ENCODE measurements at regions of chr14 and their contacts with region 1.

Region 1: DNA sequence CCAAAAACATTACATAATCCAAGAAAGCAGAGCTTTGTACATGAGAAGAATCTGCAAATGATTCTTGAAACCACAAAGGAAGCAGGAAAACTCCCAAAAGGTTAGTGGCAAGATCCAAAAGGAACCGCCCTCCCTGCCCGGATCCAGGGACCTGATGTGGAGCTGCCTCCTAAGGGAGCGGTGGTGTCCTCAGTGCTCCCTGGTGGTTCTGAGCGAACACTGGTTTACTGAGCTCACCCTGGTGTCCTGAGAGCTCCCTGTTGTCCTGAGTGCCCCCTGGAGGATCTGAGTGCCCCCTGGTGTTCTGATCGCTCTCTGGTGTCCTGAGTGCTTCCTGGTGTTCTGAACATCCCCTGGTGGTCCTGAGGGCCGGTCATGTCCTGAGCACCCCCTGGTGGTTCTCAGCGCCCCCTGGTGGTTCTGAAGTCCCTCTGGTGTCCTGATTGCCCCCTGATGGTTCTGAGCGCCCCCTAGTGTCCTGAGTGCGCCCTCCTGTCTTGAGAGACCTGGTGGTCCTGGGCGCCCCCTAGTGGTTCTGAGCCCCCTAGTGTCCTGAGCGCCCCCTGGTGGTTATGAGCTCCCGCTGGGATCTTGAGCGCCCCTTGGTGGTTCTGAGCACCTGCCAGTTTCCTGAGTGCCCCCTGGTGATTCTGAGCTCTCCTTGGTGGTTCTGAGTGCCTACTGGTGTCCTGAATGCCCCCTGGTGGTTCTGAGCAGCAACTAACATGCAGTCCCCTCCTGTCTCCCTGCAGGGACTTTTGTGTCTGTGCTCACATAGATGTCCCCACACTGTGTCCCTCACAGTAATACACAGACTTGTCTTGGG is 891.1 kb downstream of the TMEM121 start:
- DNase-seq: peak; percentile 99
- ATAC-seq: peak; percentile 91
- H3K4me3 Mint-ChIP-seq: no peak overlapping the region
- H3K27ac Mint-ChIP-seq: no peak overlapping the region
- H3K4me1 Mint-ChIP-seq: peaks cover 11% of the 10 kb centered on the region
- H3K27me3 Mint-ChIP-seq: peaks cover 6% of the 10 kb centered on the region

Region 2: GRCh38 chr14:106013879-106014376 is 403.5 kb before region 1 on chr14:
- CTCF ChIA-PET with region 1: interaction called, 5 read pairs
- POLR2A ChIA-PET with region 1: no interaction called
- intact Hi-C with region 1: loop called in 1 of 2 experiments (anchors 5 kb)
- DNase-seq: peak; percentile 67
- ATAC-seq: peak; percentile 74
- H3K4me3 Mint-ChIP-seq: peak overlapping the region; percentile 50
- H3K27ac Mint-ChIP-seq: peak overlapping the region; percentile 98
- H3K4me1 Mint-ChIP-seq: peaks cover 89% of the 10 kb centered on the region
- H3K27me3 Mint-ChIP-seq: no peaks in the 10 kb centered on the region

Region 3: DNA sequence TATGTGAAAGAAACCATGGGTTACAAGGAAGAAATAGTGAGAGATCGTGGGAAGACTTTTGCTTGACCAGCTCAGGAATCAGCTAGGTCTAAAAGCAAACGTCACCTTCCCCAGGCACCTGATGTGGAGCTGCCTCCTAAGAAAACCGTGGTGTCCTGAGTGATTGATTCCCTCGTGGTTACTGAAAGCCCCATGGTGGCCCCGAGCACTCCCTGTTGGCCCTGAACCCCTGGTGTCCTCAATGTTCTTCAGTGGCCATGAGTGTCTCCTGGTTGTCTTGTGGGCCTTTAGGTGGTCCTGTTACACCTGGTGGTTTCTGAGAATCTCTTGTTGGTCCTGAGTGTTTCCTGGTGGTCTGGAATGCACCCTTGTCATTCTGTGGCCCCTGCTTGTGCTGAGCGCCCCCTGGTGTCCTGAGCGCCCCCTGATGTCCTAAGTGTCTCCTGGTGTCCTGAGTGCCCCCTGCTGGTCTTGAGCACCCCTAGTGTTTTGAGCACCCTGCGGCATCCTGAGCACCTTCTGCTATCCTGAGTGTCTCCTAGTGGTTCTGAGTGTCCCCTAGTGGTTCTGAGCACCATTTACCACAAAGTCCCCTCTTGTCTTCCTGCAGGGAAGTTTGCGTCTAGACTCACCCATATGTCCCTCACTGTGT is 372.4 kb before region 1 on chr14:
- CTCF ChIA-PET with region 1: no interaction called
- POLR2A ChIA-PET with region 1: no interaction called
- intact Hi-C with region 1: no loop called
- DNase-seq: peak; percentile 93
- ATAC-seq: peak; percentile 100
- H3K4me3 Mint-ChIP-seq: no peak overlapping the region
- H3K27ac Mint-ChIP-seq: peak overlapping the region; percentile 34
- H3K4me1 Mint-ChIP-seq: peaks cover 11% of the 10 kb centered on the region
- H3K27me3 Mint-ChIP-seq: no peaks in the 10 kb centered on the region

Region 4: DNA sequence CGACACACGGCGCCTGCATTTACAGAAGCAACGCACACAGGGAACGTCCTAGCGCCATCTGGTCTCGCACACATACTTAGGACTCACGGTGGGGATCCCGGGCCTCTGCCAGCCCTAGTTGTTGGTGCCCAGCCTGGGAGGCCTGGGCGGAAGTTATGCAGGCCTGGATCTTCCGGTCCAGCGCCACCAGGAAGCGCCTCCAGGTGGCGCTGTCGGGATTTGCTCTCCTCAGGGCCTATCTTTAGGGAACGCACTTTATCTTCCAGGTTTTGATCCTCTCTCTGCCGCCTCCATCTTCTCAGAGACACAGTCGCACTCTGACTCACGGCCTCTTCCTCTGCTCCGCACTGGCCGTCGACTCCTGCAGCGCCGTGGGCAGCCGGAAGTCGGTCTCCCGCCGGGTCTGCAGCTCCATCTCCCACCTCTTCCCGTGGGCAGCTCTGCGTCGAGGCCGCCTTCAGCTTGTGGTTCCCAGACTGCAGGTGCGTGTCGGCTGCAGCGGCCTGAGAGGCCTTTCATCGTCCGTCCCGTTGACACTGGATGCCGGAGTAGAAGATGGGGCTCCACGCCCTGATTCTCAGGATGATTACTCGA is 130.6 kb before region 1 on chr14:
- CTCF ChIA-PET with region 1: interaction called, 13 read pairs
- POLR2A ChIA-PET with region 1: no interaction called
- intact Hi-C with region 1: no loop called
- DNase-seq: peak; percentile 56
- ATAC-seq: peak; percentile 44
- H3K4me3 Mint-ChIP-seq: no peak overlapping the region
- H3K27ac Mint-ChIP-seq: no peak overlapping the region
- H3K4me1 Mint-ChIP-seq: no peaks in the 10 kb centered on the region
- H3K27me3 Mint-ChIP-seq: peaks cover 3% of the 10 kb centered on the region

Region 5: GRCh38 chr14:106347291-106347778 is 70.1 kb before region 1 on chr14:
- CTCF ChIA-PET with region 1: interaction called, 12 read pairs
- POLR2A ChIA-PET with region 1: no interaction called
- intact Hi-C with region 1: no loop called
- DNase-seq: no peak
- ATAC-seq: no peak
- H3K4me3 Mint-ChIP-seq: no peak overlapping the region
- H3K27ac Mint-ChIP-seq: no peak overlapping the region
- H3K4me1 Mint-ChIP-seq: no peaks in the 10 kb centered on the region
- H3K27me3 Mint-ChIP-seq: no peaks in the 10 kb centered on the region

Region 6: GRCh38 chr14:106395456-106396050 is 21.9 kb before region 1 on chr14:
- CTCF ChIA-PET with region 1: interaction called, 132 read pairs
- POLR2A ChIA-PET with region 1: interaction called, 3 read pairs
- intact Hi-C with region 1: no loop called
- DNase-seq: peak; percentile 67
- ATAC-seq: peak; percentile 80
- H3K4me3 Mint-ChIP-seq: peak overlapping the region; percentile 55
- H3K27ac Mint-ChIP-seq: peak overlapping the region; percentile 93
- H3K4me1 Mint-ChIP-seq: peaks cover 31% of the 10 kb centered on the region
- H3K27me3 Mint-ChIP-seq: peaks cover 11% of the 10 kb centered on the region

Region 7: DNA sequence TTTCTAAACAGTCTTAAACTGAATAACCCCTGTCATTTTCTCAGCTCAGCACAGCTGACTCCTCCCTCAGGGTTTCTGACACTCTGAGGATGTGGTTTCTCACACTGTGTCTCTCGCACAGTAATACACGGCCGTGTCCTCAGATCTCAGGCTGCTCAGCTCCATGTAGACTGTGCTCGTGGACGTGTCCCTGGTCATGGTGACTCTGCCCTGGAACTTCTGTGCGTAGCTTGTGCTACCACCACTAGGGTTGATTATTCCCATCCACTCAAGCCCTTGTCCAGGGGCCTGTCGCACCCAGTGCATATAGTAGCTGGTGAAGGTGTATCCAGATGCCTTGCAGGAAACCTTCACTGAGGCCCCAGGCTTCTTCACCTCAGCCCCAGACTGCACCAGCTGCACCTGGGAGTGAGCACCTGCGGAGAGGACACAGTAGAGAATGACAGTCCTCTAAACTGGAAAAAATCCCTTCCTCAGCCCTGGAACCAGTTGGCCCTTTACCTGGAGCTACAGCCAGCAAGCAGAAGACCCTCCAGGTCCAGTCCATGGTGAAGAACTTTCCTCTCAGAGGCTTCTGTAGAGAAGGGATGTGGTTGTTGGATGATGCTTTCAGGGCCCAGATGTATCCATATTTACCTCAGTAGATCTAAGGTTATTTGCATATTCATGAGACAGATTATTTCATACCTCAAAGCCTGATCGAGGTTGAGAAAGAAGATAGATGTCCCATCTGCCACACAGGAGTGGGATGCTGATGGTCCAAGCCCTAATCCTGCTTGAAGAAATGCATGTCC is 93.8 kb after region 1 on chr14:
- CTCF ChIA-PET with region 1: interaction called, 54 read pairs
- POLR2A ChIA-PET with region 1: no interaction called
- intact Hi-C with region 1: no loop called
- DNase-seq: peak; percentile 69
- ATAC-seq: peak; percentile 53
- H3K4me3 Mint-ChIP-seq: peak overlapping the region; percentile 15
- H3K27ac Mint-ChIP-seq: peak overlapping the region; percentile 51
- H3K4me1 Mint-ChIP-seq: peaks cover 73% of the 10 kb centered on the region
- H3K27me3 Mint-ChIP-seq: no peaks in the 10 kb centered on the region

Region 8: DNA sequence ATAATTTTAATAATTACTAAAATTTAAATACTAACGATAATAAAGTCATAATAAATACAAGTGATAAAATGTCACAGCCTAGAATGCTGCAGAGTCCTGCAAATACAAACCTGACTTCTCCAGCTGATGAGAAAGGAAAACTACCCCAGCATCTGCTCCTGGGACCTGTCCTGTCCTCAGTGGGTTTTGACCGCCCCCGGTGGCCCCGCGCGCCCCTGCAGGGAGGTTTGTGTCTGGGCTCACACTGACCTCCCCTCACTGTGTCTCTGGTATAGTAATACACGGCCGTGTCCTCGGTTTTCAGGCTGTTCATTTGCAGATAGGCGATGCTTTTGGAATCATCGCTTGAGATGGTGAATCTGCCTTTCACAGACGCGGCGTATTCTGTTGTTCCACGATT is 248.4 kb after region 1 on chr14:
- CTCF ChIA-PET with region 1: interaction called, 6 read pairs
- POLR2A ChIA-PET with region 1: no interaction called
- intact Hi-C with region 1: loop called in 1 of 2 experiments (anchors 5 kb)
- DNase-seq: peak; percentile 75
- ATAC-seq: no peak
- H3K4me3 Mint-ChIP-seq: no peak overlapping the region
- H3K27ac Mint-ChIP-seq: no peak overlapping the region
- H3K4me1 Mint-ChIP-seq: peaks cover 23% of the 10 kb centered on the region
- H3K27me3 Mint-ChIP-seq: peaks cover 4% of the 10 kb centered on the region

Measured in activated CD4-positive, alpha-beta T cell treated with anti-CD3 and anti-CD28 coated beads for 36 hours (primary cell).